CD4-positive, alpha-beta memory T cell (primary cell): ENCODE measurements at regions of chr19 and their contacts with region 1.

Region 1: DNA sequence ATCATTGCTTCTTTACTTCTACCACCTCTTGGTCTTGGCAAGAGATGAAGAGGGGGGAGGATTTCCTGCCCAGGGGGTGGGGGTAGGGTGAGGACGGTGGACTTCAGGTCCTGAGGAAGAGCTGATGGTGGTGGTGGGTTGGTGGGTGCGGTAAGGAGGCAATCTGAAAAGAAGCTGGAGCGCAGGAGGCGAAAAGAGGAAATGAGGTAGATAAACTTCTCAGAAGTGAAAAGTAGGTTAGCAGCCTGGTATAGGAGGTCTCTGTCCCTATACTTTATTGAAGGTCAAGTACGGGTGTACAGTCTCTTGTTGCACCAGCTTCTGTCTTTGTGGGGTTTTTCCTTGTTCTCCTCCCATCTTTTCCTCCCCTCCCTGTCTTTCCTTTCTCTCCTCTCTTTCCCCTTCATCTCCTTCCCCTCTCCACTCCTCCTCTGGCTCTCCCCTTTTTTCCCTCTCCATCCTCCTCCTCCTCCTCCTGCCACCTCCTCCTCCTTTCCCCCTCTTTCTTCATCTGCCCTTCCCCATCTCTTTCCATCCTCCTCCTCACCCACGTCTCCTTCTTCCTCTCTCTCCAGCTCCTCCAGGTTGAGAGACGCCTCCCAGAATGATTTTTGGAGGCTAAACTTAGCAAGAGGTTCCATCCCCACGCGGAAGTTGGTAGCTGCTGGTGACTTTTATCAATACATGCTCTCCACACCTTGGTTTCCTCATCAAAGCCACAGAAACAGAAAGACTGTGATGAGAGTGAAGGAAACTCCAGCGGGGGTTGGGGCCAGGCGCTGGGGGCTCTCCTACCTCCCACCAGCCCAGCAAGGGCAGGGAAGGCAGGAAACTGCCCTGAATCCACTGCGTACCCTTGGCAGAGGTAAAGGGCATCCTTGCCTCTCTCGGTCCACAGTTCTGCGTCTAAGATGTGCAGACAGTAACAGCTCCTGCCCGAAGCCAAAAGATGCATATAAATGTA is 15.3 kb downstream of the TNFSF14 start:
- DNase-seq: peak; percentile 45 to 68 (median 55)
- H3K4me3 ChIP-seq: peak overlapping the region; percentile 53
- H3K4me3 Mint-ChIP-seq: peak overlapping the region; percentile 78 to 94 (median 86)
- H3K27ac ChIP-seq: peak overlapping the region; percentile 50
- H3K27ac Mint-ChIP-seq: peak overlapping the region; percentile 91 to 98 (median 93)
- H3K4me1 ChIP-seq: peaks cover 39% of the 10 kb centered on the region
- H3K4me1 Mint-ChIP-seq: peaks cover 29 to 58% (median 45%) of the 10 kb centered on the region in 4 donors
- H3K27me3 ChIP-seq: no peaks in the 10 kb centered on the region
- H3K27me3 Mint-ChIP-seq: no peaks in the 10 kb centered on the region

Region 2: GRCh38 chr19:6530386-6531161 is 124.1 kb before region 1 on chr19 and contains the start of gene TNFSF9:
- CTCF ChIA-PET with region 1: no interaction called
- POLR2A ChIA-PET with region 1: no interaction called
- intact Hi-C with region 1: no loop called
- DNase-seq: peak; percentile 61 to 82 (median 71)
- H3K4me3 ChIP-seq: peak within 1 kb of the TSS; percentile 38 to 57
- H3K4me3 Mint-ChIP-seq: peak within 1 kb of the TSS; percentile 82 to 98 (median 86)
- H3K27ac ChIP-seq: peak within 1 kb of the TSS; percentile 10
- H3K27ac Mint-ChIP-seq: peak within 1 kb of the TSS; percentile 48 to 92 (median 81)
- H3K4me1 ChIP-seq: peaks cover 28% of the 10 kb centered on the region
- H3K4me1 Mint-ChIP-seq: peaks cover 21 to 46% (median 34%) of the 10 kb centered on the region in 4 donors
- H3K27me3 ChIP-seq: peaks cover 13% of the 10 kb centered on the region
- H3K27me3 Mint-ChIP-seq: peaks cover 18 to 20% of the 10 kb centered on the region in 2 donors
- total RNA-seq, gene TNFSF9: 0.64 to 0.99 TPM

Region 3: DNA sequence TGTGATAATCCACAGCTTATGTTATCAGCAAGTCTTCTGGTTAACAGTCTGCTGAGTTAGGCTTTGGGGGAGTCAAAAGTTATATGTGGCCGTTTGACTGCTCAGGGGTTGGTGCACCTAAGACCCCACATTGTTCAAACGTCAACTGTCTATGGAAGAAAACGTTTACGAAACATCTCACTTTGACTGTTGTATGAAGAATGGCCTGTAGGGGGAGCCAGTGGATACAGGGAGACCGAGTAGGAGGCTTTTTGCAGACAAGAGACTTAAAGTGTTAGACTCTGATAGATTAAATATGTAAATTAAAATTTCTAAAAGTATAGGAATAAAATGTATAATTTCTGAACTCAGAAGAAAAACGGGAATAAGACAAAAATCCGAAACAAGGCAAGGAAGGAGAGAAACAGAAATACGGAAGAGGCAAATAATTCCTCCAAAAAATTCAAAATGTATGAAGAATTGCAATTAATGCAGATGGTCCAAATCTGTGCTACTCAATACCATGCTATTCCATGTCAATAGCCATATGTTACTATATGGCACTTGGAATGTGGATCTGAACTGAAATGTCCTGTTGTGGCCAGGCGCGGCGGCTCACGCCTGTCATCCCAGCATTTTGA is 22.5 kb before region 1 on chr19:
- CTCF ChIA-PET with region 1: interaction called, 10 read pairs
- POLR2A ChIA-PET with region 1: no interaction called
- intact Hi-C with region 1: no loop called
- DNase-seq: peak; percentile 78 to 86 (median 82)
- H3K4me3 ChIP-seq: no peak overlapping the region
- H3K4me3 Mint-ChIP-seq: no peak overlapping the region
- H3K27ac ChIP-seq: no peak overlapping the region
- H3K27ac Mint-ChIP-seq: peak overlapping the region in 3 of 7 donors; percentile 3 to 24 (median 22)
- H3K4me1 ChIP-seq: peaks cover 7% of the 10 kb centered on the region
- H3K4me1 Mint-ChIP-seq: peaks cover 8 to 15% (median 10%) of the 10 kb centered on the region in 4 donors
- H3K27me3 ChIP-seq: no peaks in the 10 kb centered on the region
- H3K27me3 Mint-ChIP-seq: peaks cover 1 to 2% of the 10 kb centered on the region in 2 donors

Region 4: DNA sequence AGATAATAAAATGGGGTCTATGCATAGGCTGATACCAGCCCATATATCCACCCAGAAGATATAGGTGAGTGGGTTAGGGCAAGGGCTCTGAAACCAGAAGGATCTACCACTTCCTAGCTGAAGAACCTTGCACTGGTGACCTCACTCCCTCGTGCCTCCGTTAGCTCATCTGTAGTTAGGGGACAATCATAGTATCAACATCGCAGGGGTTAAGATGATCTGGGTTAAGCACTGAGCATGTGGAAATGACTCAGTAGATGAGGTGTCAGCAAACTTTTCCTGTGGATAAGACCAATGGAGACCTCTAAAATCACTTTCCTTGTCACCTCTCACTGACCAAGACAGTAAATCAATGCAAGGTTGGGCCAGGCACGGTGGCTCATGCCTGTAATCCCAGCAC is 15.2 kb before region 1 on chr19:
- CTCF ChIA-PET with region 1: interaction called, 10 read pairs
- POLR2A ChIA-PET with region 1: interaction called, 14 read pairs
- intact Hi-C with region 1: no loop called
- DNase-seq: no peak
- H3K4me3 ChIP-seq: no peak overlapping the region
- H3K4me3 Mint-ChIP-seq: peak overlapping the region in 2 of 8 donors; percentile 15 to 68
- H3K27ac ChIP-seq: no peak overlapping the region
- H3K27ac Mint-ChIP-seq: peak overlapping the region in 4 of 7 donors; percentile 10 to 57 (median 41)
- H3K4me1 ChIP-seq: peaks cover 35% of the 10 kb centered on the region
- H3K4me1 Mint-ChIP-seq: peaks cover 22 to 42% (median 33%) of the 10 kb centered on the region in 4 donors
- H3K27me3 ChIP-seq: no peaks in the 10 kb centered on the region
- H3K27me3 Mint-ChIP-seq: no peaks in the 10 kb centered on the region

Region 5: DNA sequence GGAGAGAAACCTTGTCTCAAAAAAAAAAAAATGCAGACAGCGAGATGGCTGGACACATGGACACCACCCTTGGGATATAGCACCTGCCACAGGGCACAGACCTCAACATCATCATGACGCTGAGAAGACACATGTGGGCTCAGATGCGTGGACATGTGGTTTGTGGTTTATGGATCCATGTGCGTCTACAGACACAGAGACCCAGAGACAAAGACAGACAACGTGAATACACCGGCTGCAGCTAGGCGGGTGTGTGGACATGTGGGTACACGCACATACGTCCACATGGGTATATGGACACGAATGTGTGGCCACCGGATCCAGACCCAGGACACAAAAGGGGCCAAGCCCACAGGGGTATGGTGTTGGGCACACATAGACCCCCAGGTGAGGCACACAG is 14.1 kb after region 1 on chr19:
- CTCF ChIA-PET with region 1: interaction called, 9 read pairs
- POLR2A ChIA-PET with region 1: interaction called, 47 read pairs
- intact Hi-C with region 1: loop called (anchors 2 kb)
- DNase-seq: peak in 3 of 5 donors; percentile 33 to 73 (median 36)
- H3K4me3 ChIP-seq: peak overlapping the region; percentile 64 to 81
- H3K4me3 Mint-ChIP-seq: peak overlapping the region; percentile 97 to 100 (median 98)
- H3K27ac ChIP-seq: peak overlapping the region; percentile 71
- H3K27ac Mint-ChIP-seq: peak overlapping the region; percentile 94 to 99 (median 97)
- H3K4me1 ChIP-seq: peaks cover 50% of the 10 kb centered on the region
- H3K4me1 Mint-ChIP-seq: peaks cover 19 to 51% (median 37%) of the 10 kb centered on the region in 4 donors
- H3K27me3 ChIP-seq: no peaks in the 10 kb centered on the region
- H3K27me3 Mint-ChIP-seq: no peaks in the 10 kb centered on the region

Region 6: DNA sequence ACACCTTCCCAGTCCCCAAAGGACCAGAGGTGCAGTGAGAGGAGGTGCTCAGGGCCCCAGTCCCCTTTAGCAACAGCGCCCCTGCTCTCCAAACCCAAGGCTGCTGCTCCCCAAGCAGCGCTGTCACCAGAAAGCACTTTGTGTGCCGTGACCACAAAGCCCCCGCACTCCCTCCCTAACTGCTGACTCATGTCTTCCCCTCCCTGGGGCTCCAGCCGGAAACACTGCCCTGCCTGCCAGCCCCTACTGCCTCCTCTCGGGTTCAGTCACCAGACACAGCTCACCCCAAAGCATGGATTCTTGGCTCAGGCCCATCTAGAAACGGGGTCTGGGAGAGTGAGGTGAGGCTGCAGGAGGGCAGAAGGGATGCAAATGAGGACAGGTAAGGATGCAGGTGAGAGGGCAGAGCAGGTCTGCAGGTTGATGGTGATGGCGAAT is 20.3 kb after region 1 on chr19:
- CTCF ChIA-PET with region 1: interaction called, 9 read pairs
- POLR2A ChIA-PET with region 1: interaction called, 47 read pairs
- intact Hi-C with region 1: no loop called
- DNase-seq: peak; percentile 76 to 94 (median 81)
- H3K4me3 ChIP-seq: peak overlapping the region in 1 of 2 donors; percentile 44
- H3K4me3 Mint-ChIP-seq: peak overlapping the region; percentile 58 to 77 (median 72)
- H3K27ac ChIP-seq: peak overlapping the region; percentile 44
- H3K27ac Mint-ChIP-seq: peak overlapping the region; percentile 60 to 92 (median 81)
- H3K4me1 ChIP-seq: peaks cover 55% of the 10 kb centered on the region
- H3K4me1 Mint-ChIP-seq: peaks cover 39 to 82% (median 58%) of the 10 kb centered on the region in 4 donors
- H3K27me3 ChIP-seq: no peaks in the 10 kb centered on the region
- H3K27me3 Mint-ChIP-seq: no peaks in the 10 kb centered on the region